Spleen (tissue), 13 donors: ENCODE measurements at regions of chr9 and their contacts with region 1.

Region 1: GRCh38 chr9:129884220-129885017 is 49.2 kb downstream of the USP20 start:
- DNase-seq: peak; percentile 100
- H3K4me3 ChIP-seq: peak overlapping the region; percentile 22 to 72 (median 48)
- H3K27ac ChIP-seq: peak overlapping the region; percentile 86 to 96 (median 92)
- H3K4me1 ChIP-seq: peaks cover 49 to 68% (median 62%) of the 10 kb centered on the region in 6 donors
- H3K27me3 ChIP-seq: no peaks in the 10 kb centered on the region
- CTCF ChIP-seq: no peak
- POLR2A ChIP-seq: peak in 1 of 3 donors; percentile 25

Region 2: GRCh38 chr9:129823935-129824601 is 60.4 kb before region 1 on chr9 and contains the start of gene TOR1A:
- intact Hi-C with region 1: no loop called
- DNase-seq: peak; percentile 99
- H3K4me3 ChIP-seq: peak within 1 kb of the TSS; percentile 63 to 89 (median 83)
- H3K27ac ChIP-seq: peak within 1 kb of the TSS; percentile 37 to 93 (median 84)
- H3K4me1 ChIP-seq: peaks cover 8 to 30% (median 15%) of the 10 kb centered on the region in 6 donors
- H3K27me3 ChIP-seq: no peaks in the 10 kb centered on the region
- CTCF ChIP-seq: peak in 2 of 11 experiments; percentile 6 to 18
- POLR2A ChIP-seq: no peak
- total RNA-seq, gene TOR1A: 27.7 to 49.5 (median 32.5) TPM

Region 3: GRCh38 chr9:129962889-129963703 is 78.7 kb after region 1 on chr9:
- intact Hi-C with region 1: loop called (anchors 10 kb)
- DNase-seq: peak; percentile 85
- H3K4me3 ChIP-seq: peak overlapping the region; percentile 22 to 65 (median 36)
- H3K27ac ChIP-seq: peak overlapping the region; percentile 81 to 96 (median 94)
- H3K4me1 ChIP-seq: peaks cover 22 to 93% (median 52%) of the 10 kb centered on the region in 6 donors
- H3K27me3 ChIP-seq: no peaks in the 10 kb centered on the region
- CTCF ChIP-seq: peak in 1 of 11 experiments; percentile 12
- POLR2A ChIP-seq: peak in 1 of 3 donors; percentile 67

Region 4: GRCh38 chr9:130042833-130043653 is 158.6 kb after region 1 on chr9 and contains the start of gene FNBP1:
- intact Hi-C with region 1: loop called (anchors 5 kb)
- DNase-seq: peak; percentile 95
- H3K4me3 ChIP-seq: peak within 1 kb of the TSS; percentile 72 to 92 (median 78)
- H3K27ac ChIP-seq: peak within 1 kb of the TSS; percentile 87 to 99 (median 98)
- H3K4me1 ChIP-seq: peaks cover 25 to 81% (median 63%) of the 10 kb centered on the region in 6 donors
- H3K27me3 ChIP-seq: no peaks in the 10 kb centered on the region
- CTCF ChIP-seq: peak in 1 of 11 experiments; percentile 22
- POLR2A ChIP-seq: peak; percentile 61 to 89 (median 68)
- total RNA-seq, gene FNBP1: 132 to 156 (median 148) TPM

Region 5: DNA sequence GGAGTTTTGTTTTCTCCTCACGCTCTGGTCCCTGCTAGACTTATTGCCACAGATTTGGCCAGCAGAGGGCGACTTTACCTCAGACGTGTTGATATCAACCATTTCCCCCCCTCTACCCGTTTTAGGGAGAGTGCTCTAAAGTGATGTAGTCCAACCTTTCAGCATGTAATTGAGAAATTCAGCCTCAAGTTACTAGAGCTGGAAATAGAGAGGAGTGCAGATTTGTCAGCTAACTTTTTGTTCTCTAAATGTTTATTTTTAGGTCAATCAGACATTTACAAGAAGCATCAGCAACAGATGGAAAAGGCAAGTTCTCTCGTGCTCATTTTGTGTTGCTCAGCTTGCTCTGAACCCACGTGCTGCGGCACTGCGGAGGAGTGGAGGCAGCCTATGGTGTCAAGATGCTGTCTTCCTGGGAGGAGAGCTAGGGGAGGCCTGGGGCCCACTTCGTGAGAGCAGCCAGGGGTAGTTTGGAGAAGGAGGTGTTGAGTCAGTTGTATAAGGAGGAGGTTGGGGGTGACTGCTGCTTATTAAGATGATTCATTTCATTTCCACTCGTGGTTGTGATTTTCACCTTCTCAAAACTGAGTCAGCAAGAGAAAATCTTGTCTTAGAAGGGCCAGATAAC is 222.9 kb after region 1 on chr9:
- intact Hi-C with region 1: loop called (anchors 5 kb)
- DNase-seq: peak; percentile 91
- H3K4me3 ChIP-seq: no peak overlapping the region
- H3K27ac ChIP-seq: no peak overlapping the region
- H3K4me1 ChIP-seq: peaks cover 0 to 24% (median 4%) of the 10 kb centered on the region in 6 donors
- H3K27me3 ChIP-seq: no peaks in the 10 kb centered on the region
- CTCF ChIP-seq: peak; percentile 72 to 89 (median 83)
- POLR2A ChIP-seq: peak in 1 of 3 donors; percentile 17